Endothelial cell of umbilical vein (primary cell): ENCODE measurements at regions of chr14 and their contacts with region 1.

Region 1: DNA sequence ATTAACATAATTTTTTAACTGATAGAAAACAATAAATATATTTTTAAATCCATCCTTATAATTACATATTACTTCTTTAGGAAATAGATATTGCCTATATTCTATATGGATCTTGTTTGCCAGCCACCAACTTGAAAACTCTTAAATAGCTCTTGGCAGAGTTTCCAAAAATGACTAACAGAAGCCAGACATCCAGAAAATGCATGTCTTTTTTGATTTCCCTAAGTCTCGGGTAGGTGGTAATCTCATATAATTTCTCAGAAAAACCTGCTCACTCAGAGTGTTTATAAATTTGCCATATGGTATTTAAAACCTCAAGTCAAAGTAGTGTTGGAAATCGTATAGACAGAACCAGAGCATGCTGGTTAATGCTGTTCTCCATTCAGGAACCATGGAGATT is 360.4 kb upstream of the FOXG1 start:
- DNase-seq: peak; percentile 6
- H3K4me3 ChIP-seq: no peak overlapping the region
- H3K27ac ChIP-seq: no peak overlapping the region
- H3K4me1 ChIP-seq: no peaks in the 10 kb centered on the region
- H3K27me3 ChIP-seq: no peaks in the 10 kb centered on the region
- CTCF ChIP-seq: no peak
- POLR2A ChIP-seq: no peak

Region 2: GRCh38 chr14:27688841-27689444 is 717.3 kb before region 1 on chr14:
- CTCF ChIA-PET with region 1: no interaction called
- POLR2A ChIA-PET with region 1: no interaction called
- dilution Hi-C with region 1: no loop called
- intact Hi-C with region 1: loop called (anchors 10 kb)
- DNase-seq: no peak
- H3K4me3 ChIP-seq: no peak overlapping the region
- H3K27ac ChIP-seq: no peak overlapping the region
- H3K4me1 ChIP-seq: peaks cover 11% of the 10 kb centered on the region
- H3K27me3 ChIP-seq: no peaks in the 10 kb centered on the region
- CTCF ChIP-seq: no peak
- POLR2A ChIP-seq: no peak

Region 3: DNA sequence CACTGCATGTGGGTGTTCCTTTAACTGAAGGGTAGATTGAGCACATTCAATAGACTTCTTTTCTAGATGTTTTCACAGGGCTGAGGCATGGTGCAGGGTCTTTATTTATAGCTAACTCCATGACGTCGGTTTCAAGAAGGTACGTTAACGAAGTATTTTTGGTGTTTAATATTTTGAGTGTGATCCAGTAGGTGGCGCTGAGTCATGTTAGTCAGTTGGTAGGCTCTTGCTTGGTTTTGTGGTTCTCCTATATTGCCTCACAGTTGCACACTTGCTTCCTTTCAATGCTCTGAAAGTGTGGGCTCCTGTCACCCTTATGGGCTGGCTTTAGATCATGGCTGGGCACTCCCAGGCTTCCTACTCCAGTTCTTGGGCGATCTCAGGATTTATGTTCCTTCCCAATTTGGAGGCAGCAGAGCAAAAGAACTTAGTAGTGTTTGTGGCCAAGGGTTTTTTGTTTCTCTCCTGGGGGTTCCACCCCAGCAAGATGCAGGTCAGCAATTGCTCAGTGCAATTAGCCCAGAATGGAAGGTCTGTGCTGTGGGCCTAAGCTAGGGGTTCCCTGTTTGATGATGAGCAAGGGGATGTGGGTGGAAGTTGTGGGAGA is 111.3 kb before region 1 on chr14:
- CTCF ChIA-PET with region 1: no interaction called
- POLR2A ChIA-PET with region 1: no interaction called
- dilution Hi-C with region 1: no loop called
- intact Hi-C with region 1: loop called (anchors 1 kb)
- DNase-seq: peak; percentile 33
- H3K4me3 ChIP-seq: no peak overlapping the region
- H3K27ac ChIP-seq: no peak overlapping the region
- H3K4me1 ChIP-seq: no peaks in the 10 kb centered on the region
- H3K27me3 ChIP-seq: no peaks in the 10 kb centered on the region
- CTCF ChIP-seq: peak; percentile 10 to 38
- POLR2A ChIP-seq: no peak

Region 4: DNA sequence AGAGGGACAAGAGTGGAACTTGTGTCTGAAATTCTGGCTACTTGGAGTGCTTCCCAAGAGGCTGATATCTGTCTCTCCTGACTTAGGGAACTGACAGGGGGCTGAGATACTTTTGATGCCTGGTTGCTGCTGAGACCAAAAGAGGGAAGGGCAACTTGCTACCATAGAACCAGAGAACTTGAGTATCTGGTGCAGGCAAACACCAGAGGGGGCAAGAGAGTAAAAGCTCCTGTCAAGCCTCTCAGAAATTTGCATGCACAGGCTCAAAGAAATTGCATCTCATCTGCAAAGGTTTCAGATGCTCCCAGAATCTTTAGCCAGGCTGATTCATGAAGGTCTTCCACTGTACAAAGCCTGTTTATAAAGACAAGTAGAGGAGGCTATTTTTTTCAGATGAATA is 30.9 kb before region 1 on chr14:
- CTCF ChIA-PET with region 1: interaction called, 13 read pairs
- POLR2A ChIA-PET with region 1: no interaction called
- dilution Hi-C with region 1: no loop called
- intact Hi-C with region 1: loop called (anchors 2 kb)
- DNase-seq: peak; percentile 19
- H3K4me3 ChIP-seq: no peak overlapping the region
- H3K27ac ChIP-seq: no peak overlapping the region
- H3K4me1 ChIP-seq: peaks cover 5% of the 10 kb centered on the region
- H3K27me3 ChIP-seq: no peaks in the 10 kb centered on the region
- CTCF ChIP-seq: peak; percentile 33 to 39
- POLR2A ChIP-seq: no peak

Region 5: DNA sequence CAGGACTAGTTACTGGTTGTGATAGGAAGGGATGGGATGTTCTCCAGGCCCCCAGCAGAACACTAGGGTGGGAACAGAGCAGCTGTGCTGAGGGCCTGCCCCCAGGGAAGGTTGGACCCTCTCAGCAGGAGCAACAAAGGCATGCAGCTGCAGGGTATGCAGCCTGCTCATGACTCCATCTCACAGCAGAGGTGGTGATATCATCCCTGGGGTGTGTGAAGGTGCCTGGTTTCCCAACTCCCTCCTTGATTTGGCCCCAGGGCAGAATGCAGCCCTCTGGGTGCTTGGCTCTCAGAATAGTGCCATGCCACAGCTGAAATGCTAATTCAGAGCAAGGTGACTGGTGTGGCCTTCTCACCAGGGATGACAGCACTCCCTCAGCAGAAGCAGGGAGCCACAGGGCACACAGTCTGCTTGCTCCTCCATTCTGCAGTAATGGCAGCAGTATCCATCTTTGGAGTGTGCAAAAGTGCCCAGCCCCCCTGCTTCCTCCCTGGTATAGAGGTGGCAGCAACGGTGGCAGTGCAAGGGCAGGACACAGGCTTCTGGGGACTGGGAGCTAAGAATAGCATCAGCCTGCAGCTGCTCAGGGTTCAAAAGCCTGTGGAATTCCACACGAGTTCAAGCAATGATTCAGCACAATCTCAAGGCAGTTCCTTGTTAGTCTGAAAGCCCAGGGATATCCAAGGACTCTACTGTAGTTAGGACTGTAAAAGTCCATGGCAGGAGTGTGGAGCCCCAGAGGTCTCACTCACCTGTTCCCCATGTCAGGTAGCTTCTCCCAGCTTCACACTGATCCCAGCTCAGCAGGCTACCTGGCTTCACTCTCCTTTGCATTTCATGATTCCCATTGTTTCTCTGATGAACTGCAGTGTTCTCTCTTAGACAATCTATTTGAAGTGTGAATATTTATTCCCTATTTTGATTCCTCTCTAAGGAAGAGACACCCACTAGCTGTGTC is 62.3 kb after region 1 on chr14:
- CTCF ChIA-PET with region 1: no interaction called
- POLR2A ChIA-PET with region 1: no interaction called
- dilution Hi-C with region 1: no loop called
- intact Hi-C with region 1: no loop called
- DNase-seq: no peak
- H3K4me3 ChIP-seq: no peak overlapping the region
- H3K27ac ChIP-seq: no peak overlapping the region
- H3K4me1 ChIP-seq: no peaks in the 10 kb centered on the region
- H3K27me3 ChIP-seq: no peaks in the 10 kb centered on the region
- CTCF ChIP-seq: no peak
- POLR2A ChIP-seq: no peak